T-cell (primary cell): ENCODE measurements at regions of chr17 and their contacts with region 1.

Region 1: GRCh38 chr17:76868176-76868668 is at the start of gene MGAT5B:
- DNase-seq: peak; percentile 31 to 90 (median 66)
- ATAC-seq: peak; percentile 95 to 97 (median 96)
- H3K4me3 ChIP-seq: peak within 1 kb of the TSS in 1 of 2 donors; percentile 58
- H3K4me3 Mint-ChIP-seq: peak within 1 kb of the TSS; percentile 75 to 79 (median 78)
- H3K27ac ChIP-seq: no peak within 1 kb of the TSS
- H3K27ac Mint-ChIP-seq: peak within 1 kb of the TSS in 1 of 2 donors; percentile 58
- H3K4me1 ChIP-seq: peaks cover 2 to 18% of the 10 kb centered on the region in 2 experiments
- H3K4me1 Mint-ChIP-seq: peaks cover 6 to 16% (median 11%) of the 10 kb centered on the region in 3 donors
- H3K27me3 ChIP-seq: peaks cover 2 to 66% of the 10 kb centered on the region in 2 experiments
- H3K27me3 Mint-ChIP-seq: peaks cover 21 to 31% of the 10 kb centered on the region in 2 donors
- total RNA-seq, gene MGAT5B: 0.15 to 2.4 (median 0.79) TPM

Region 2: DNA sequence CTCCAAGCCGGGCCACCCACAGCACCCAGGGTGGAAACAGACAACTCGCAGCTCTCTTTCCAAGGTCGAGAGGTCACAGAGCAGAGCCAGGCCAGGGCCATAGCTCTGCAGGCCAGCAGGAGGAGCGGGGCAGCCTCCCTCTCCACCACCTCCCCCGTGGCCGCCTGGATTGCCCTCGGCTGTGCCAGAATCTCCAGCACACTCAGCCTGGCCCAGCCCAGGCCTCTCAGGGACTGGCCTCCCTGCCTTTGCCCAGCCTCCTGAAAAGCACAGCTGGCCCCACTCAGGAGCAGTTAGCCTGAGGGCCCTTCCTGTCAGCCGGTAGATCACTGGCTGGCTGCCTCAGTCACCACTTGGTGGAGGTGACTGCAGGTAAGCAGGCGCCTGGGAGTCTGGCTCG is 186.7 kb after region 1 on chr17:
- CTCF ChIA-PET with region 1: interaction called, 5 to 30 read pairs
- POLR2A ChIA-PET with region 1: no interaction called
- DNase-seq: no peak
- ATAC-seq: no peak
- H3K4me3 ChIP-seq: no peak overlapping the region
- H3K4me3 Mint-ChIP-seq: no peak overlapping the region
- H3K27ac ChIP-seq: no peak overlapping the region
- H3K27ac Mint-ChIP-seq: no peak overlapping the region
- H3K4me1 ChIP-seq: peaks cover 0 to 7% of the 10 kb centered on the region in 2 experiments
- H3K4me1 Mint-ChIP-seq: peaks cover 0 to 6% (median 2%) of the 10 kb centered on the region in 3 donors
- H3K27me3 ChIP-seq: peaks cover 0 to 66% of the 10 kb centered on the region in 2 experiments
- H3K27me3 Mint-ChIP-seq: peaks cover 12 to 31% of the 10 kb centered on the region in 2 donors

Region 3: DNA sequence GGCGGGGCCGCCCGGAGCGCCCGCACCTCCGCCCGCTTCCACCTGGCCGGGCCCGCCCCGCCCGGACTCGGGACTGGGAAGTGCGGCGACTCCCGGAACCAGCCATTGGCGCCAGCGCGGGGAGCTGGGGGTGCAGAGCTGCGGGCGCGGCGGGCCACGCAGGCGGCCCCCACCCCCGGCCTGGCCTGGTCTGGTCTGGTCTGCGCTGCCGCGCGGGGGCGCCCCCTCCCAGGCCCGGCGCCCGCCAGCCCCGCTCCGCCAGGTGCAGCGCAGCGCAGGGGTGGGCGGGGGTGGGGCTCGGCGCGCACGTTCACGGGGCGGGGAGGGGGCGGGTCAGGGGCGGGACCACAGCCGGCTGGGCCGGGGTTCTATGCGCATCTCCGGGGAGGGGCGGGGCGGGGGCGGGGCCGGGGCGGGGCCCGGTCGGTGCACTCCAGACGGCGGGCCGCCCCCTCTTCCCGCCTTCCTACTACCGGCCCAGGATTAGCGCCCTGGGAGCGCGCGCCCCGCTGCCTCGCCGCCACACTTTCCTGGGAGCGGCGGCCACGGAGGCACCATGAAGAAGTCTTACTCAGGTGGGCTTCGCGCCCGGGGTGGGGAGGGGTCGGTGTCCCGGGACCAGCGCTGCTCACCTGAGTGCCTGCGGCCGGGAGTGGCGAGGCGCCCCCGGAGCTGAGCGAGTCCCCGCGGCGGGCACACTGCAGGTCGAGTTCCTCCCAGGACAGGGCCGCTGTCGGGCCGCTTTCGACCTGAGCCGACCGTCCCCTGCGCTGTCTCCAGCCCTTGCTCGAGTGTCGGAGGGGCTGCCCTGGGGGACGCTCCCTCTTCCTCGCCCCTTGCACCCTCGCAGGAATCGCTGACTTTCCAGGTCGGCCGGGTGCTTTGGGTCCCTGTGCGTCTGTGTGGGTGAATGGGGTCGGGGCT is 413.0 kb after region 1 on chr17:
- CTCF ChIA-PET with region 1: no interaction called
- POLR2A ChIA-PET with region 1: interaction called in 1 of 2 experiments, 13 read pairs
- DNase-seq: peak; percentile 7 to 83 (median 51)
- ATAC-seq: peak; percentile 94 to 96 (median 94)
- H3K4me3 ChIP-seq: peak overlapping the region; percentile 47 to 66
- H3K4me3 Mint-ChIP-seq: peak overlapping the region; percentile 71 to 78 (median 77)
- H3K27ac ChIP-seq: no peak overlapping the region
- H3K27ac Mint-ChIP-seq: peak overlapping the region; percentile 79 to 87
- H3K4me1 ChIP-seq: peaks cover 0 to 22% of the 10 kb centered on the region in 2 experiments
- H3K4me1 Mint-ChIP-seq: peaks cover 14 to 22% (median 18%) of the 10 kb centered on the region in 3 donors
- H3K27me3 ChIP-seq: peaks cover 0 to 60% of the 10 kb centered on the region in 2 experiments
- H3K27me3 Mint-ChIP-seq: peaks cover 0 to 16% of the 10 kb centered on the region in 2 donors

Region 4: DNA sequence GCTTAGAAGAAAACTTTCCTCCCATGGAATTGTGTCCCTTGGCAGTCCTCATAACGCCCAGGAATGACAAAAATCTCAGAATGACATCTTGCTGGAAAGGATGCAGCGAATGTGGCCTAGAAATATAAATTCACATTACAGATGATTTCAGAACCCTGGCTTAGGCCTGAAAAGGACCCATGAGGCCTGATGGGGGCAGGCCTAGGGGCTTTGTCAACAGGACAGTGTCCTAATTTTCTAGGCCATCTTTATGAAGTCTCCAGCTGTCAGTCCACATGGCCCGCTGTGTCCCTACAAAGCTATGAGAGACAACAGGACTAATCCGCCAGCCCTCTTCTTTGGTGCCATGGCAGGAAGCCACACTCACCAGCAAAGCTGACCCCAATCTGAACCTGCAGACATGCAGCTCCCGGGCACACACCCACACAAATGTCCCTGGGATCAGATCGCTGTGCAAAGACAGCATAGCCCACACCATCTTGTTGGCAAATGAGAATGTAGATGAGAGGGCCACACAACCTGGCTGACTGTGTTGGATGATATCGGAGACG is 1749.4 kb after region 1 on chr17:
- CTCF ChIA-PET with region 1: no interaction called
- POLR2A ChIA-PET with region 1: no interaction called
- DNase-seq: no peak
- ATAC-seq: no peak
- H3K4me3 ChIP-seq: no peak overlapping the region
- H3K4me3 Mint-ChIP-seq: no peak overlapping the region
- H3K27ac ChIP-seq: no peak overlapping the region
- H3K27ac Mint-ChIP-seq: no peak overlapping the region
- H3K4me1 ChIP-seq: no peaks in the 10 kb centered on the region
- H3K4me1 Mint-ChIP-seq: peaks cover 0 to 6% (median 0%) of the 10 kb centered on the region in 3 donors
- H3K27me3 ChIP-seq: peaks cover 0 to 15% of the 10 kb centered on the region in 2 experiments
- H3K27me3 Mint-ChIP-seq: no peaks in the 10 kb centered on the region